ENCODE measurements at regions of chr12 and their contacts with region 1.

Region 1: GRCh38 chr12:133130038-133130807 is at the starts of genes ZNF10 and ZNF891:
- DNase-seq: peak; percentile 94 to 97 (median 96)
- H3K4me3 ChIP-seq: peak within 1 kb of the TSS; percentile 68 to 98 (median 89)
- H3K27ac ChIP-seq: peak within 1 kb of the TSS; percentile 78 to 99 (median 96)
- H3K27me3 ChIP-seq: no peaks in the 10 kb centered on the region
- CTCF ChIP-seq: peak in 34 of 56 donors; percentile 4 to 61 (median 21)
- total RNA-seq, gene ZNF10: 11.2 to 29.4 (median 20.0) TPM
- total RNA-seq, gene ZNF891: 3.4 to 8.4 (median 5.9) TPM

Region 2: DNA sequence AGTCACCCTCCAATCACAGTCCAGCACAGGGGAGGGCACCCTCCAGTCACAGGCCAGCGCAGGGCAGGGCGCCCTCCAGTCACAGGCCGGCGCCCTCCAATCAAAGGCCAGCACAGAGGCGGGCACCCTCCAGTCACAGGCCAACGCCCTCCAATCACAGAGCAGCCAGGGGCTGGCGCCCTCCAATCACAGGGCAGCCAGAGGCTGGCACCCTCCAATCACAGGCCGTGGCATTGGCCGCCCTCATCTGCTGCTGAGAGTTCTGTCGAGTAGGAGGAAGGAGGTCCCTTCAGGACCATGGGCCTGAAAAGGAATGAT is 1012.7 kb before region 1 on chr12:
- intact Hi-C with region 1: no loop called
- DNase-seq: no peak
- H3K4me3 ChIP-seq: no peak overlapping the region
- H3K27ac ChIP-seq: no peak overlapping the region
- H3K27me3 ChIP-seq: no peaks in the 10 kb centered on the region
- CTCF ChIP-seq: no peak

Region 3: GRCh38 chr12:132275110-132275531 is 855.1 kb before region 1 on chr12:
- intact Hi-C with region 1: no loop called
- DNase-seq: peak in 7 of 10 donors; percentile 64 to 94 (median 72)
- H3K4me3 ChIP-seq: peak overlapping the region in 5 of 59 donors; percentile 13 to 35 (median 19)
- H3K27ac ChIP-seq: peak overlapping the region in 1 of 59 donors; percentile 70
- H3K27me3 ChIP-seq: peaks cover 0 to 53% (median 17%) of the 10 kb centered on the region in 45 donors
- CTCF ChIP-seq: no peak

Region 4: GRCh38 chr12:132986001-132986912 is 144.0 kb before region 1 on chr12 and contains the start of gene ZNF26:
- intact Hi-C with region 1: loop called in 1 of 2 experiments (anchors 5 kb)
- DNase-seq: peak; percentile 83 to 94 (median 92)
- H3K4me3 ChIP-seq: peak within 1 kb of the TSS; percentile 73 to 100 (median 96)
- H3K27ac ChIP-seq: peak within 1 kb of the TSS; percentile 9 to 95 (median 85)
- H3K27me3 ChIP-seq: no peaks in the 10 kb centered on the region
- CTCF ChIP-seq: peak in 25 of 56 donors; percentile 9 to 50 (median 27)
- total RNA-seq, gene ZNF26: 9.4 to 26.4 (median 16.9) TPM

Region 5: DNA sequence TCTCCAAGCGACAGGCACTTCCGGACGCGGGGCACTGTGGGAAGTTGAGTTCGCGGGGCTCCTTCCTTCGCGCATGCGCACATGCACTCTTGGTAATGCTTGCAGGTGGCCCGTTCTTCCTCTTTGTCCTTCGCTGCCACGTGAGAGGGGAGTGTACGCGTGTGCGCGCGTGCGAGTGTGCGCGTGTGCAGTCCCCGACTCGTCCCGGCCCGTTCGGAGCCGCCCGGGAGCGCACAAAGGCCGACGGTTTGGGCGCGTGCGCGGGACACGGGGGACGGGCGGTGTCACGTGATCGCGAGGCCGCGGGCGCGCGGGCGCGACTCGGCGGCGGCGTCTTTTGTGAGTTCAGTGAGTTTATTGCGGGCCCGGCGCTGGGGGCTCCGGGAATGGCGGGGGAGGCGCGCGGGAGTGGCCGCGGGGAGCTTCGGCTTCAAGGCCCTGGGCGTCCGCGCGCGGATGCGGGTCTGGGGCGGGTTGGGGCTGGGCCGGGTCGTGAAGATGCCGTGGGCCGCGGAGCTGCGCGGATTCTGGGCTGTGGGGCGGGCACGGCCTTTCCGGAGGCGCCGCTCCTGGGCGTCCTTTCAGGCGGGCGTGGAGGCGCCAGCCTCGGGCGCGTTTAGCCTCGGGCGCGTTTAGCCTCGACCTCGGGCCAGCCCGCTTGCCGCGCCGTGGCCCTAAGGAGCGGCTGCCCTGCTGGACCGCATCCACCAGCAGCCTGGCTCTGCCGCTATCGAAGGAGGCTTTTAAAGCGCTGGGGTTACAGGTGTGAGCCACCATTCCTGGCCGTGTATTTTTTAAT is 92.8 kb before region 1 on chr12 and contains the start of gene ZNF84:
- intact Hi-C with region 1: loop called in 1 of 2 experiments (anchors 5 kb)
- DNase-seq: peak; percentile 84 to 96 (median 94)
- H3K4me3 ChIP-seq: peak within 1 kb of the TSS; percentile 54 to 96 (median 87)
- H3K27ac ChIP-seq: peak within 1 kb of the TSS; percentile 77 to 97 (median 94)
- H3K27me3 ChIP-seq: no peaks in the 10 kb centered on the region
- CTCF ChIP-seq: peak in 12 of 56 donors; percentile 3 to 34 (median 19)
- total RNA-seq, gene ZNF84: 41.1 to 80.4 (median 61.2) TPM

Region 6: GRCh38 chr12:133058203-133059125 is 71.8 kb before region 1 on chr12:
- intact Hi-C with region 1: loop called in 1 of 2 experiments (anchors 2 kb)
- DNase-seq: no peak
- H3K4me3 ChIP-seq: no peak overlapping the region
- H3K27ac ChIP-seq: no peak overlapping the region
- H3K27me3 ChIP-seq: no peaks in the 10 kb centered on the region
- CTCF ChIP-seq: no peak

Region 7: DNA sequence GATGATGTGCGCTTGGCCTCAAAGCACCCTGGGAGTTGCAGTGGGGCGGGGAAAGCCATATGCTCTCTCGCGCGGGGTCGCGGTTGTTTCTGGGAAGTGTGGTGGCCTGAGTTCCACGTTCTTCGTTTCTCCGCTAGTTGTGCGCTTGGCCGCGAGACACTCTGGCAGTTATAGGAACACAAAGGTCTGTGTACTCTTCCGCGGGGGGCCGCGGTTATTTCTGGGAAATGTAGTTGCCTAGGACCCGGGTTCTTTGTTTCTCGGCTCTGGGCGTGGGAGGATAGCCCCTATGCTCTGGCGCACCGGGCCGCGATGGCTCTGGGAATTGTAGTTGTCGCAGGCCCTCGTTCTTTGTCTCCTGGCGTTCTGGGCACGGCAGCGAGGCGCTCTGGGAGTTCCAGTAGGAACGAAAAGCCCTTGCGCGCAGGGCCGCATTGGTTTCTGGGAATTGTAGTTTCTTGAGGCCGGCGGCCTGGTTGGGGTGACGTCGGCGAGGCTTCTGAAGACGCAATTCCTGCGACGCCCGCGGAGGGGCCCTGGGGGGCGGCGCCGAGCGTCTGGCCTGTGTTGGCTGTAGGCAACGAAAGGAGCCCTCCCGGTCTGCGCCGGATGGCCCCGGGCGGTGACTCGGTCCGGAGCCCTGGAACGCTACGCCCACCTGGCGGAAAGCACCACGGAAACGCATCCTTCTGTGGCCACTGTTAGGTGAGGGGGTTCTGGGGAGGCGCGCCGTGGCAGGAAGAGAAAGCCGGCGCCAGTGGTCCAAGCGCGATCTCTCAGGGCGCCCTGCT is 49.7 kb before region 1 on chr12 and contains the start of gene ZNF140:
- intact Hi-C with region 1: loop called (anchors 1 kb)
- DNase-seq: peak; percentile 96 to 99 (median 98)
- H3K4me3 ChIP-seq: peak within 1 kb of the TSS; percentile 72 to 100 (median 94)
- H3K27ac ChIP-seq: peak within 1 kb of the TSS; percentile 88 to 100 (median 97)
- H3K27me3 ChIP-seq: peaks cover 0 to 2% (median 0%) of the 10 kb centered on the region in 45 donors
- CTCF ChIP-seq: peak in 27 of 56 donors; percentile 5 to 52 (median 29)
- total RNA-seq, gene ZNF140: 9.3 to 21.3 (median 13.5) TPM

Region 8: GRCh38 chr12:133145981-133146380 is 15.8 kb after region 1 on chr12:
- intact Hi-C with region 1: loop called in 1 of 2 experiments (anchors 1 kb)
- DNase-seq: no peak
- H3K4me3 ChIP-seq: no peak overlapping the region
- H3K27ac ChIP-seq: no peak overlapping the region
- H3K27me3 ChIP-seq: no peaks in the 10 kb centered on the region
- CTCF ChIP-seq: no peak

Region 9: GRCh38 chr12:133181238-133181959 is 51.2 kb after region 1 on chr12 and contains the start of gene ZNF268:
- intact Hi-C with region 1: loop called in 1 of 2 experiments (anchors 2 kb)
- DNase-seq: peak; percentile 81 to 92 (median 86)
- H3K4me3 ChIP-seq: peak within 1 kb of the TSS; percentile 56 to 99 (median 90)
- H3K27ac ChIP-seq: peak within 1 kb of the TSS in 44 of 59 donors; percentile 8 to 86 (median 52)
- H3K27me3 ChIP-seq: no peaks in the 10 kb centered on the region
- CTCF ChIP-seq: peak; percentile 61 to 94 (median 84)
- total RNA-seq, gene ZNF268: 12.1 to 30.3 (median 21.0) TPM